WTC11 (cell line): ENCODE measurements at regions of chr2 and their contacts with region 1.

Region 1: GRCh38 chr2:74587664-74588277 is 33.3 kb downstream of the DOK1 start:
- DNase-seq: peak; percentile 61
- ATAC-seq: peak; percentile 96
- H3K4me3 Mint-ChIP-seq: no peak overlapping the region
- H3K27ac Mint-ChIP-seq: peak overlapping the region; percentile 37
- H3K4me1 Mint-ChIP-seq: peaks cover 11% of the 10 kb centered on the region
- H3K27me3 Mint-ChIP-seq: peaks cover 3% of the 10 kb centered on the region
- CTCF ChIP-seq: no peak; the same call in 1 of the 2 replicates

Region 2: DNA sequence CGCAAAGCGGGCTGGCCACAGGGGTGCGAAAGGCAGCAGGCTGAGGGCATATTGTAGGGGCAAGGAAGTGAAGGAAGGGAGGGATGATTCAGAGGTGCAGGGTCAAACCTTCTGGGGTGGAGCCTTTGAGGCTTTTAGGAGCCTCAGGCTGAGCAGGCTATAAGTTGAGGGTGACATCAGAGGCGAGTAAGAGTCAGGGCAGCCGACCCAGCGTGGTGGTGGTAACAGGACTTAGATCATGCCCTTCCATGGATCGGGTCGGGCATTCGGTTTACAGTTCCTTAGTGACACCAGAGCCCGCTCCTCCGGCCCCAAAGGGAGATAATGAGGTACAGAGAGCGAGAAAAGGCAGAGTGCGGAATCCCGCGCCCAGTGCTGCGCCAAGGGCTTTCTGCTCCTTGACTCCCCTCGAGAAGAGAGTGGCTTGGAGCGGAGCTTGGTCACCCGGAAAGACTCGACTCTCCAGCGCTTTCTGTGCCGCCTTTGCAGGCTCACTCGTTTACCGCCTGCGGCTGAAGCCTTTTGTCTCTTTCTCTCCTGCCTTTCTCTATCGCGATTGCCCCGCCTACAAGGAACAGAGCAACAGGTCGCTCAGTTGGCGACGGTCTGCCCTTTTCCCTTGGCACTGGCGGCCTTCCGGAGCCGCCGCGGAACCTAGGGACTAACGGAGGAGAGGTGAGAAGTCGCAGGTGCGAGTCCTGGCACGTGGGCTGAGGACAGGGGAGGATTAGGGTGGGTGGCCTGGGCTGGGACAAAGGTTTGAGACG is 89.1 kb before region 1 on chr2:
- CTCF ChIA-PET with region 1: interaction called, 18 read pairs
- POLR2A ChIA-PET with region 1: no interaction called
- DNase-seq: peak; percentile 63
- ATAC-seq: peak; percentile 13
- H3K4me3 Mint-ChIP-seq: peak overlapping the region; percentile 79
- H3K27ac Mint-ChIP-seq: no peak overlapping the region
- H3K4me1 Mint-ChIP-seq: peaks cover 43% of the 10 kb centered on the region
- H3K27me3 Mint-ChIP-seq: peaks cover 96% of the 10 kb centered on the region
- CTCF ChIP-seq: no peak

Region 3: GRCh38 chr2:74507145-74507925 is 80.4 kb before region 1 on chr2 and contains the start of gene PCGF1:
- CTCF ChIA-PET with region 1: interaction called, 10 read pairs
- POLR2A ChIA-PET with region 1: no interaction called
- DNase-seq: peak; percentile 99
- ATAC-seq: peak; percentile 86
- H3K4me3 Mint-ChIP-seq: peak within 1 kb of the TSS; percentile 99
- H3K27ac Mint-ChIP-seq: peak within 1 kb of the TSS; percentile 100
- H3K4me1 Mint-ChIP-seq: peaks cover 29% of the 10 kb centered on the region
- H3K27me3 Mint-ChIP-seq: peaks cover 92% of the 10 kb centered on the region
- CTCF ChIP-seq: no peak
- total RNA-seq, gene PCGF1: 13.7 to 15.7 TPM (median 15.4 TPM) in 3 replicates

Region 4: GRCh38 chr2:74573747-74574562 is 13.8 kb before region 1 on chr2:
- CTCF ChIA-PET with region 1: interaction called, 14 read pairs
- POLR2A ChIA-PET with region 1: no interaction called
- DNase-seq: no peak
- ATAC-seq: no peak; the same call in 1 of the 2 replicates
- H3K4me3 Mint-ChIP-seq: no peak overlapping the region
- H3K27ac Mint-ChIP-seq: no peak overlapping the region
- H3K4me1 Mint-ChIP-seq: peaks cover 10% of the 10 kb centered on the region
- H3K27me3 Mint-ChIP-seq: peaks cover 22% of the 10 kb centered on the region
- CTCF ChIP-seq: no peak